Gastrocnemius medialis (tissue), 4 donors: ENCODE measurements at regions of chr16 and their contacts with region 1.

Region 1: DNA sequence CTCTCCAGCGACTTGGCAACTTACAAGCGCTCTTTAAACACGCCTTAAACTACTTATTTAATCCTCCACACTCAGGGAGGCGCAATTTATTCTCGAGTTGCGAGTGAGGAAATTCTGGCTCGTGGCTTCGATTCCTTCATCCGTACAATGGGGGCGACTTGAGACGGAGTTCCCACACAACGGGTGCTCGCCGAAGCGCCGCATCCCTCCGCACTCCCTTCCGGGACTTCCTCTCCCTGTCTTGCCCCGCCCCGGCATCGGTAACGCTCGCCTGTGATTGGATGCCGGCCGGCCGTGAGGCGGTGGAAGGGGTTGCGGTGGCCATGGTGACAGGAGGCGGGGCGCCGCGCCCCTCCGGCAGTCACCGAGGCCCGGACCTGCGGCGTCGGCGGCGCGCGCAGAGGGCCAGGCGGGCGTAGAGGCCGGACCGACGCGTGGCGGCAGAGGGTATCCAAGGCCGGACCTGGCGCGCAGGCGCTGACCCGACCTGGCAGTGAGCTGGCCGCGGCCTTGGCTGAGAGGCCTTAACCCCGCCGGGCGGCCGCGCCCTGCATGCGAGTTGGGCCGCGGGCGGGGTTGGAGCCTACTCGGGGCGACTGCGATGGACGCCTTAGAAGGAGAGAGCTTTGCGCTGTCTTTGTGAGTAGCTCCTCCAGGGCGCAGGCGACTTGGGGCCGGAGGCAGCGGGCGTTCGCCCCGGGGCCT is at the start of gene ARL2BP:
- DNase-seq: peak; percentile 96 to 98
- ATAC-seq: peak; percentile 92 to 93
- H3K4me3 ChIP-seq: peak within 1 kb of the TSS; percentile 75 to 97 (median 87)
- H3K27ac ChIP-seq: peak within 1 kb of the TSS; percentile 91 to 99 (median 94)
- H3K4me1 ChIP-seq: peaks cover 8 to 12% of the 10 kb centered on the region in 2 donors
- H3K27me3 ChIP-seq: no peaks in the 10 kb centered on the region
- CTCF ChIP-seq: no peak
- POLR2A ChIP-seq: peak; percentile 69 to 79
- total RNA-seq, gene ARL2BP: 25.5 to 52.6 (median 44.5) TPM

Region 2: DNA sequence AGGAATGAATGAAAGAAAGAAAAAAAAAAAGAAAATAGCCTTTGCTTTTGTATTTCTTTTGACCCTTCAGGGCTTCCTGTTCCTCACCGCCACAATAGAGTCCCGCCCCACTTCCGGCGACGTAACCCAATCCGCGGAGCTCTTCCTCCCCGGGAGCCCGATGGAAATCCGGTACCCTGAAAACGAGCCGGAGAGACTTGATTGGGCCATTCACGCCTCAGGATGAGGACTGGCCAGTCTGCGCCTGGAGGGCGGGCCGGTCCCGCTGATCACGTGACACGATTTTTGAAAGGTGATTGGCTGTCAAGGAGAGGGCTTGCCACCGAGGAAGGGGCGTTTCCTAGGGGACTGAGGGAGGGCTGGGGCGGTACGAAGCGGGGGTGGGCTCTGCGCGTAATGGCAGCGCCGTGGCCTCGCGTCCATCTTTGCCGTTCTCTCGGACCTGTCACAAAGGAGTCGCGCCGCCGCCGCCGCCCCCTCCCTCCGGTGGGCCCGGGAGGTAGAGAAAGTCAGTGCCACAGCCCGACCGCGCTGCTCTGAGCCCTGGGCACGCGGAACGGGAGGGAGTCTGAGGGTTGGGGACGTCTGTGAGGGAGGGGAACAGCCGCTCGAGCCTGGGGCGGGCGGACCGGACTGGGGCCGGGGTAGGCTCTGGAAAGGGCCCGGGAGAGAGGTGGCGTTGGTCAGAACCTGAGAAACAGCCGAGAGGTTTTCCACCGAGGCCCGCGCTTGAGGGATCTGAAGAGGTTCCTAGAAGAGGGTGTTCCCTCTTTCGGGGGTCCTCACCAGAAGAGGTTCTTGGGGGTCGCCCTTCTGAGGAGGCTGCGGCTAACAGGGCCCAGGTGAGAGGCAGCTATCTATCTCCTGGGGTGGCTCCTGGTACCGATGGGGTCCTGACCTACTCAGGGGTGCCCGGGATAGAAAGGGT is 58.7 kb before region 1 on chr16 and contains the starts of genes PSME3IP1 and RSPRY1:
- in situ Hi-C with region 1: no loop called
- intact Hi-C with region 1: loop called (anchors 1 kb)
- DNase-seq: peak; percentile 99
- ATAC-seq: peak; percentile 97 to 99
- H3K4me3 ChIP-seq: peak within 1 kb of the TSS; percentile 81 to 94 (median 92)
- H3K27ac ChIP-seq: peak within 1 kb of the TSS; percentile 92 to 97 (median 95)
- H3K4me1 ChIP-seq: peaks cover 32 to 40% of the 10 kb centered on the region in 2 donors
- H3K27me3 ChIP-seq: no peaks in the 10 kb centered on the region
- CTCF ChIP-seq: peak in 2 of 5 experiments; percentile 35 to 40
- POLR2A ChIP-seq: peak; percentile 84 to 85
- total RNA-seq, gene PSME3IP1: 43.8 to 57.6 (median 53.4) TPM
- total RNA-seq, gene RSPRY1: 15.4 to 24.1 (median 20.7) TPM

Region 3: DNA sequence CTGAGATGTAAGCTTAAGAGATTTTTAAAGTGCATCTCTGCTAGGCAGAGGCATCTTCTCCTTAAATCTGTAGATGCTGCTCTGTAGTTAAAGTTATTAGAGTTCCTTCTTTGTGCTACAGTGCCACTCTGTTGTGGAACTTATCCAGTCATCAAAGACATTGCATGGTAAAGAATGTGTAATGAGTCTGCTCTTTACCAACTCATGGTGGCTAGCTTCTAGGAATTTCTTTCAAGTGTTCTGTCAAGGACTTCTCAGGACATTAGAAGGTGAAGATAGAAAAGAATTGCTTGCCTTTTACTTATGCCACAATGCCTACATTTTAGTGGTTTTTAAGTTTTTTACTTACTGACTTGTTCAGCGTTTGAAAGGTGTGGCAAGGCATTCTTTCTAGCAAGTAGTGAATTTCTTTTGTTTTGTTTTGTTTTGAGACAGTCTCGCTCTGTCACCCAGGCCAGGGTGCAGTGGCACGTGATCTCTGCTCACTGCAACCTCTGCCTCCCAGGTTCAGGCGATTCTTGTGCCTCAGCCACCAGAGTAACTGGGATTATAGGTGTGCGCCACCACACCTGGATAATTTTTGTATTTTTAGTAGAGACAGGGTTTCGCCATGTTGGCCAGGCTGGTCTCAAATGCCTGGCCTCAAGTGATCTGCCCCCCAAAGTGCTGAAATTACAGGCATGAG is 20.1 kb before region 1 on chr16:
- in situ Hi-C with region 1: no loop called
- intact Hi-C with region 1: no loop called
- DNase-seq: no peak
- ATAC-seq: no peak
- H3K4me3 ChIP-seq: no peak overlapping the region
- H3K27ac ChIP-seq: no peak overlapping the region
- H3K4me1 ChIP-seq: no peaks in the 10 kb centered on the region
- H3K27me3 ChIP-seq: no peaks in the 10 kb centered on the region
- CTCF ChIP-seq: no peak
- POLR2A ChIP-seq: no peak